Vagina (tissue), 2 donors: ENCODE measurements at regions of chr20 and their contacts with region 1.

Region 1: DNA sequence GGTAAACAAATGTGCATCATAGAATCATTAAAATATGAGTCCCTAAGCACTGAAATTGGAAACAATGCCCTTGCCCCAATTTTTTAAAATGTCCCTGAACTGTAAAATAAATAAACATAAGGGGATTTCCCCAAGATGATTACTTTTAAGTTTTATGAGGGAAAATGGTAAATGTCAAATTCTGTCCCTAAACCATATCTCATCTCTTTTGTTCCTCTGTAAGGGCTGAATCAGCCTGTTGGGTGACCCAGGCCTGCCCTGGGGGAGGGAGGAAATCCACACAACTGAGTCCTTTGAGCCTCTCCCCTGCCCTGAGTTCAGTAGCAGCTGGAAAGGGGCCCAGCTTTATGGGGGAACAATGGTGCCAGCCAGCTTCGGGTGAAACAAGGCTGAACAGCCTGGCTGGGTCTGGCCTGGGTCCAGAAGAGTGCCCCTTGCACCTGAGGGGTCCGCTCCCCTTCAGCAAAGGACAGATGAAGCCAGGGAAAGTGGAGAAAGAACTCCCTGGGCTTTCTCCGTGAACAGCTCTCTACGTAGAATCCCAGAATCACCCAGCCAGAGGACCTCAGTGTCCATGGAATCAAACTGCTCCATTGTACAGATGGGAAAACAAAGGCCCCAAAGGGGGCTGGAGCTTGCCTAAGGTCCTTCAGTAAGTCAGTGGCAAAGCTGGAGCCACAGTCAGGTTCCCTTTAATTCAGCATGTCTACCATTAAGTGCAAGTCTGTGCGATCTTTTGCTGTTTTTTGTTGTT is 28.2 kb upstream of the ITCH start:
- DNase-seq: no peak
- H3K4me3 ChIP-seq: no peak overlapping the region
- H3K27ac ChIP-seq: no peak overlapping the region
- H3K4me1 ChIP-seq: peaks cover 7% of the 10 kb centered on the region
- H3K27me3 ChIP-seq: no peaks in the 10 kb centered on the region
- CTCF ChIP-seq: no peak
- POLR2A ChIP-seq: no peak

Region 2: GRCh38 chr20:34180460-34181120 is 154.2 kb before region 1 on chr20:
- intact Hi-C with region 1: no loop called
- DNase-seq: no peak
- H3K4me3 ChIP-seq: no peak overlapping the region
- H3K27ac ChIP-seq: no peak overlapping the region
- H3K4me1 ChIP-seq: peaks cover under 1% of the 10 kb centered on the region
- H3K27me3 ChIP-seq: no peaks in the 10 kb centered on the region
- CTCF ChIP-seq: no peak
- POLR2A ChIP-seq: no peak

Region 3: DNA sequence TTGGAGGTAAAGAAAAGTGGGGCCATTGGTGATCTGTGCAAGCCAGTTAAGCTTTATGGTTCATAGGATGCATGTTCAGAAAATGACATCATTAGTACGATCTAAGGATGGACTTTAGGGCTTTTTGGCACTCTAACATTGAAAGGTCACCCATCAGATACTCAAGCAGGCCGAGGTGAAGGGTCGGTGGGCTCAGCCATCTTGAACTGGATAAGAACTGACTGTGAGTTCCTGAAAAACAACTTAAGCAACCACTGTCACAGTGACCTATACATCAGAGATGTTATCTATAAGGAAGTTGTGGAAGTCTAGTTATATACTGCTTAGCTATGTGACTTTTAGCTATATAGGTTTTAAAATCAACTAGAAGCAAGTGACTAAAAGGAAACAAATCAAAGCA is 15.3 kb after region 1 on chr20:
- intact Hi-C with region 1: loop called (anchors 1 kb)
- DNase-seq: no peak
- H3K4me3 ChIP-seq: no peak overlapping the region
- H3K27ac ChIP-seq: no peak overlapping the region
- H3K4me1 ChIP-seq: no peaks in the 10 kb centered on the region
- H3K27me3 ChIP-seq: no peaks in the 10 kb centered on the region
- CTCF ChIP-seq: no peak
- POLR2A ChIP-seq: no peak

Region 4: GRCh38 chr20:34473262-34473883 is 138.5 kb after region 1 on chr20:
- intact Hi-C with region 1: no loop called
- DNase-seq: no peak
- H3K4me3 ChIP-seq: no peak overlapping the region
- H3K27ac ChIP-seq: peak overlapping the region; percentile 43
- H3K4me1 ChIP-seq: peaks cover 12% of the 10 kb centered on the region
- H3K27me3 ChIP-seq: no peaks in the 10 kb centered on the region
- CTCF ChIP-seq: no peak
- POLR2A ChIP-seq: no peak